H1 (cell line): ENCODE measurements at regions of chr4 and their contacts with region 1.

Region 1: DNA sequence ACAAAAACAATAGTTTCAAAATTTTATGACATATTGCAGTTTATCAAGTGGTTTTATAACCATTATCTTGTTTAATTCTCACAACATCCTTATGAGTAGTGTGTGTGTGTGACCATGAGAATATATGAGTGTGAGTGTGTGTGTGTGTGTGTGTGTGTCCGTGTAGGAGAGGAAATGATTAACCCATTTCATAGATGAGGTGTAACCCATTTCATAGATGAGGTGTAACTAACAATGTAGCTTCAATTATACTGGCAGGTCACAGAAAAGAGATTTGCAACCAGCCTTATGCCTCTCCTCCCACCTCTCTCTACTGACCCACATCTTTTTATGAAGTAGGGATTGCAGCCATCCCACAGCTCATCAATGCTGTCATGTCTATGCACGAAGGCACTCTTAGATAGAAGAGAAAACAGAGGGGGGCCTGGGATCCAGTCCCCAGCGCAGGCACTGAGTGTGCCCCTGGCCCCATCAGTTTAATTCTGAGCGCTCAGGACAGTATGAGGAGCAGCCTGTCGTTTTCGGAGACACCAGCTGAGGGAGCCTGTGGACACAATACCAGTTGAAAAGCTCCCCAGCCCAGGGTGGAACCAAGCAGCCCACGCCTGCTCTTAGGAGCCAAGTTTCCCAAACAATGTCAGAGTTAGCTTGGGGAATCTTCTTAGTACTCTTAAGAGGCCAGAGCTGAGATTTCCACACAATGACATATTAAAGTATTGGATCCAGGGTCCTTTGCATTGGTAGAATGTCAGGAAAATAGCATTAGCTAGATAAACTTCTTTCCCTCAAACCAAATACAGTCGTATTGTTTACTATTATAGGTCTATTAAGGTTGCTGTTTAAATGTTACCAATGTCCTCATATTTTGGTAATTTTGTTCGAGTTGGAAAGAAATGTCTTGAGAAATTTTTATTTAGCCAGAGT is 88.6 kb downstream of the PALLD start:
- DNase-seq: peak; percentile 53 to 78
- H3K4me3 ChIP-seq: no peak overlapping the region
- H3K27ac ChIP-seq: no peak overlapping the region
- H3K4me1 ChIP-seq: peaks cover 0 to 3% (median 0%) of the 10 kb centered on the region in 4 experiments; a peak in 2 of 7 replicates
- H3K27me3 ChIP-seq: no peaks in the 10 kb centered on the region
- CTCF ChIP-seq: peak; percentile 72 to 83 (median 81)
- EP300 ChIP-seq: no peak
- POLR2A ChIP-seq: no peak
- RAD21 ChIP-seq: peak; percentile 91 to 94

Region 2: DNA sequence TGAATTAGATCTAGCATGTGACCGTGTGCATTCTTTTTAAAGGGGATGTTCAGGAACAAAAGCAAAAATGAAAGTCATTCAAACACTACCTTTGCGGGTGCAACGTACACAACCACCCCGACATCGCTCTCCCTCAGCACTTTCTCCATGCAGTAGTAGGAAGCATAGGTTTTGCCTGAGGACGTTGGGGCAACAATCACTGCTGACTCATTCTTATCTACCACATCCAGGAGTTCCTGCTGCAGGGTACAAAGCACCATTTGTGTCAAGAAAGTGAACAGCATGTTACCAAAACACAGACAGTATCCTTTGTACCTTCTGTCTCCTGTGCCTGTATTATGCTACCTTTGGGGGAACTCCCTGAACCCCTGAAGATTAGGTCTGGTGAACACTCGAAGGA is 163.8 kb before region 1 on chr4:
- CTCF ChIA-PET with region 1: no interaction called
- POLR2A ChIA-PET with region 1: no interaction called
- DNase-seq: no peak
- H3K4me3 ChIP-seq: no peak overlapping the region
- H3K27ac ChIP-seq: no peak overlapping the region
- H3K4me1 ChIP-seq: no peaks in the 10 kb centered on the region
- H3K27me3 ChIP-seq: no peaks in the 10 kb centered on the region
- CTCF ChIP-seq: no peak
- EP300 ChIP-seq: no peak
- POLR2A ChIP-seq: no peak
- RAD21 ChIP-seq: no peak

Region 3: GRCh38 chr4:168550071-168550766 is 35.2 kb before region 1 on chr4:
- CTCF ChIA-PET with region 1: no interaction called
- POLR2A ChIA-PET with region 1: no interaction called
- DNase-seq: no peak
- H3K4me3 ChIP-seq: no peak overlapping the region
- H3K27ac ChIP-seq: no peak overlapping the region
- H3K4me1 ChIP-seq: peaks cover 0 to 4% (median under 1%) of the 10 kb centered on the region in 4 experiments; a peak in 3 of 7 replicates
- H3K27me3 ChIP-seq: no peaks in the 10 kb centered on the region
- CTCF ChIP-seq: peak in 1 of 3 experiments; percentile 15; a peak in 1 of 4 replicates
- EP300 ChIP-seq: no peak
- POLR2A ChIP-seq: no peak
- RAD21 ChIP-seq: peak; percentile 22 to 30; a peak in 2 of 4 replicates

Region 4: DNA sequence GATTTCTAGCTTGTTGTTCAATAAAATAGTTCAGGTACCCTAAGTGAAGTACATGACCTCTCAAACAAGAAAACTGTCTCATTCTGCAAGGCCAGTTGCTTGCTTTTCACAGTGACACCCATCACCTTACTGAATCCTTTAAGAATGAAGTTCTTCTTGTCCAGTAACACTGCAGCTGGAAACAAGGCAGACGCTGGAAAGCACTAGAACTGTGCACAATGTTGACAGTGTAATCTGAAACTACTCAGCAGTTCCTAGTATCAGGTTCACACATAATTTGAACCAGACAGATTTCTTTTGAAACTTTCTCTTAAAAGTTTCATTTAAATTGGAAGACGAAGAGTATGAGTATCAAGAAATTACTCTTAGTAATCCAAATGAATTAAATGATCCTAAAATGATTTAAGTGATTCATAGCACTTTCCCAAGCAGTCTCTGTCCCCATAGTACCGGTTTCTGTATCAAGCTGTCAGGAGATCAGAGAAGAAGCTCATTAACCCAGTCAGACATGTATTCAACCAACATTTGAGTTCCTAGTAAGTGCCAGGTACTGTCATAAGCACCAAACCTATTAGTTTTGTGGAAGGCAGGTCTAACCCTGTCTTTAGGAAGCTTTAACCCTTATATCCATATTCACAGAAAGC is 25.1 kb before region 1 on chr4:
- CTCF ChIA-PET with region 1: interaction called, 13 read pairs
- POLR2A ChIA-PET with region 1: no interaction called
- DNase-seq: no peak
- H3K4me3 ChIP-seq: no peak overlapping the region
- H3K27ac ChIP-seq: no peak overlapping the region
- H3K4me1 ChIP-seq: peaks cover 0 to 3% (median 0%) of the 10 kb centered on the region in 4 experiments; a peak in 3 of 7 replicates
- H3K27me3 ChIP-seq: no peaks in the 10 kb centered on the region
- CTCF ChIP-seq: no peak
- EP300 ChIP-seq: no peak
- POLR2A ChIP-seq: no peak
- RAD21 ChIP-seq: no peak

Region 5: DNA sequence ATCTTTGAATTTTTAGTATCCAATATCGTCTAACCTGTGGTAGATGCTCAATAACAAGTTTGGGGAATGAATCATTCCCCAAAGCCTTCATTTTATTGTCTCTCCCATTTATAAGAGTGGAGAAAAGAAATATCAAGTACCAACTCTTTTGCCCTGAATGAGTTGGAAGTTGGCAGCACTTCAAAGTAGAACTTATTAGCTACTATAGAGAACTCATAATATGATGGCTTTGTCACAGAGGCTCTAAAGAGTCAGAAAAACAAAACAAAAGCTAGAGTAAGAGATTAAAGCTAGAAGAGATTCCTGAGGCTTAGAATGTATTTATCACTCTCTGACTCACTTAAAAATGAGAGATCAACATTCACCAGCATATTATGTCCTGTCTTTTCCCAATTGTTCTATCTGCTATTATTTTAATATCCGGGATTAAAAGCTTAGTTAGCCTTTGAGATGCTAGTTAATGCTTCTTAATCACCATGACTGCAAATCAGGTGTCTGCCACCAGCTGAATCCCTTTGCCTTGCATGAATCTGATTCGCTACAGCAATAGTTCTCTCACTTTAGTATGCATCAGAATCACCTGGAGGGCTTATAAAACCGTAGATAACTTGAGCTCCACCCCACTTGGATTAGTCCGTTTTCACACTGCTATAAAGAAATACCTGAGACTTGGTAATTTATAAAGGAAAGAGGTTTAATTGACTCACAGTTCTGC is 10.7 kb before region 1 on chr4:
- CTCF ChIA-PET with region 1: interaction called, 15 read pairs
- POLR2A ChIA-PET with region 1: no interaction called
- DNase-seq: no peak
- H3K4me3 ChIP-seq: no peak overlapping the region
- H3K27ac ChIP-seq: no peak overlapping the region
- H3K4me1 ChIP-seq: no peaks in the 10 kb centered on the region
- H3K27me3 ChIP-seq: no peaks in the 10 kb centered on the region
- CTCF ChIP-seq: no peak
- EP300 ChIP-seq: no peak
- POLR2A ChIP-seq: no peak
- RAD21 ChIP-seq: no peak

Region 6: DNA sequence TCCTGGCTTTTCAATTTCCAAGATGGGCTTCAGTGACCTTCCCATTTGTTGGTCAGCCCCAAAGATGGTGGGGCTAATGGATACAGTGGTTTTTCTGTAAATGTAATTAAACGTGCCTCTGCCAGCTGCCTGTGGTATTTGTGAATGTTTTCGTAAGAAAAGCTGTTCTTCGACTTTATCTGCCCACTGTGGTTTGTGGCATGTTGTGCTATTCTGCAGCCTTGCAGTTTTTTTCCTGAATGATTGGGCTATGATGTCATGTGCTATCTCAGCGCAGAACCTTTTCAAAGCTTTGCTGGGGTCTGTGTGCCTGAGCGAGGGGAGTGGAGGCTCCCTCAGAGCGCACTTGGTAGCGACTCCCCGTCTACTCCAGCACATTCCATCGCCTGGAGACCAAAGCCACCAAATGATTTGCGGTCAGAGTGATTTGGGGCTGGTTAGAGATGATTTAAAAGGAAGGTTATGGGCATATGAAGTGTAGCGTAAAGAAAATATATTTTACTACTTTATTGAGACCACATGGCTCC is 48.9 kb after region 1 on chr4:
- CTCF ChIA-PET with region 1: interaction called, 11 read pairs
- POLR2A ChIA-PET with region 1: no interaction called
- DNase-seq: no peak
- H3K4me3 ChIP-seq: no peak overlapping the region
- H3K27ac ChIP-seq: no peak overlapping the region
- H3K4me1 ChIP-seq: peaks cover 6 to 22% (median 15%) of the 10 kb centered on the region in 4 experiments; a peak in 6 of 7 replicates
- H3K27me3 ChIP-seq: peaks cover 0 to 1% (median 0%) of the 10 kb centered on the region in 4 experiments; a peak in 2 of 7 replicates
- CTCF ChIP-seq: no peak
- EP300 ChIP-seq: no peak
- POLR2A ChIP-seq: no peak
- RAD21 ChIP-seq: no peak

Region 7: GRCh38 chr4:168710353-168710946 is 125.0 kb after region 1 on chr4:
- CTCF ChIA-PET with region 1: interaction called, 21 read pairs
- POLR2A ChIA-PET with region 1: no interaction called
- DNase-seq: no peak
- H3K4me3 ChIP-seq: no peak overlapping the region
- H3K27ac ChIP-seq: no peak overlapping the region
- H3K4me1 ChIP-seq: no peaks in the 10 kb centered on the region
- H3K27me3 ChIP-seq: peaks cover 0 to 3% (median 0%) of the 10 kb centered on the region in 4 experiments; a peak in 2 of 7 replicates
- CTCF ChIP-seq: peak in 2 of 3 experiments; percentile 54 to 66; a peak in 3 of 4 replicates
- EP300 ChIP-seq: no peak
- POLR2A ChIP-seq: no peak
- RAD21 ChIP-seq: peak; percentile 83 to 87

Region 8: DNA sequence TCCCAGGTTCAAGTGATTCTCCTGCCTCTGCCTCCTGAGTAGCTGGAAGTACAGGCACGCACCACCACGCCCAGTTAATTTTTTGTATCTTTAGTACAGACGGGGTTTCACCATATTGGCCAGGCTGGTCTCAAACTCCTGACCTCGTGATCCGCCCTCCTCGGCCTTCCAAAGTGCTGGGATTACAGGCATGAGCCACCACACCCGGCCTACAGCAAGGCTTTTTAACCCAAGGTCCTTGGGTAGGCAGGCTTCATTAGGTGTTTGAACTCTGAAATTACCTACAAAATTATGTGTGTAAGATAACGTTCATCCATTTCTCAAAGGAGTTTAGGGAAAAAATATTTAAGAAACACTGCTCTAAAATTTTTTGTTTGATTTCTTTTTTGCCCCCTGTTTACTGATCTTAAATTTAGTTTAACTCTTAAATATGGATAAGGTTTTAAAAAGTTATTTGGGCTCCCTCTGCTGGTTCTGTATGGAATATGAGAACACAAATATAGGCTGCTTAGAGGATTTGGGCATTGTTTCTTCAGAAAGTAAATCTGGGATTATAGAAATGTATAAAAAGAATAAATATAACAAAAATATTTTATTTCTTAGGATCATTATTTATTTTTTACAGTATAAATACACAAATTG is 331.8 kb after region 1 on chr4:
- CTCF ChIA-PET with region 1: interaction called, 18 read pairs
- POLR2A ChIA-PET with region 1: interaction called, 3 read pairs
- DNase-seq: no peak
- H3K4me3 ChIP-seq: no peak overlapping the region
- H3K27ac ChIP-seq: no peak overlapping the region
- H3K4me1 ChIP-seq: peaks cover 0 to 14% (median 9%) of the 10 kb centered on the region in 4 experiments; a peak in 4 of 7 replicates
- H3K27me3 ChIP-seq: no peaks in the 10 kb centered on the region
- CTCF ChIP-seq: peak in 2 of 3 experiments; percentile 21 to 29; a peak in 2 of 4 replicates
- EP300 ChIP-seq: no peak
- POLR2A ChIP-seq: no peak
- RAD21 ChIP-seq: peak; percentile 43 to 48; a peak in 3 of 4 replicates